HCT116 (cell line): ENCODE measurements at regions of chr11 and their contacts with region 1.

Region 1: GRCh38 chr11:13183094-13183825 is 94.3 kb upstream of the BMAL1 start:
- DNase-seq: no peak
- ATAC-seq: peak; percentile 85
- H3K4me3 ChIP-seq: peak overlapping the region; percentile 34 to 52
- H3K27ac ChIP-seq: no peak overlapping the region
- H3K4me1 ChIP-seq: peaks cover 0 to 6% of the 10 kb centered on the region in 2 experiments; a peak in 2 of 4 replicates
- H3K27me3 ChIP-seq: no peaks in the 10 kb centered on the region
- CTCF ChIP-seq: peak; percentile 59 to 61 (median 60)
- POLR2A ChIP-seq: no peak
- RAD21 ChIP-seq: peak; percentile 70

Region 2: DNA sequence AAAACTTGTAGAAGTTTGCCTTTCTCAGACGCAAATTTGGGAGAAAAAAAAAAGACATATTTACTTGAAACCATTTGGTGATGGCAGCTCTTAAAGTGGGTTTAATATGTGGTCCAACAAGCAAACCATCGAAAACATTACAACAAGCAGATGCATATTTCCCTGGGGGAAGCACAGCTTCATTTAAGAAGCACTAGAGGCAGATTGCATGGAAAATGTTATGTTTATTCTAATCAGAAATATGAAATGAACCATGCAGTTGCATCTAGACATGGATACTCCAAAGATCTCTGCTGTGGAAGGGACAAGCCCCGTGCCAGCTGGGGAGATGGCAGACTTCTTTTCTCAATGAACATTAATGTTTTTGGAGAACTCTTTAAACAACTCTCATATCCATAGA is 863.3 kb before region 1 on chr11:
- CTCF ChIA-PET with region 1: no interaction called
- POLR2A ChIA-PET with region 1: no interaction called
- RAD21 ChIA-PET with region 1: no interaction called
- intact Hi-C with region 1: loop called (anchors 10 kb)
- DNase-seq: no peak
- ATAC-seq: no peak
- H3K4me3 ChIP-seq: no peak overlapping the region
- H3K27ac ChIP-seq: no peak overlapping the region
- H3K4me1 ChIP-seq: no peaks in the 10 kb centered on the region
- H3K27me3 ChIP-seq: no peaks in the 10 kb centered on the region
- CTCF ChIP-seq: no peak
- POLR2A ChIP-seq: no peak
- RAD21 ChIP-seq: no peak

Region 3: GRCh38 chr11:13135385-13136271 is 47.6 kb before region 1 on chr11:
- CTCF ChIA-PET with region 1: no interaction called
- POLR2A ChIA-PET with region 1: no interaction called
- RAD21 ChIA-PET with region 1: no interaction called
- intact Hi-C with region 1: no loop called
- DNase-seq: no peak
- ATAC-seq: peak; percentile 57
- H3K4me3 ChIP-seq: no peak overlapping the region
- H3K27ac ChIP-seq: no peak overlapping the region
- H3K4me1 ChIP-seq: peaks cover 14 to 42% of the 10 kb centered on the region in 2 experiments
- H3K27me3 ChIP-seq: no peaks in the 10 kb centered on the region
- CTCF ChIP-seq: no peak
- POLR2A ChIP-seq: no peak
- RAD21 ChIP-seq: no peak

Region 4: GRCh38 chr11:13343931-13344717 is 160.9 kb after region 1 on chr11:
- CTCF ChIA-PET with region 1: interaction called, 3 read pairs
- POLR2A ChIA-PET with region 1: no interaction called
- RAD21 ChIA-PET with region 1: no interaction called
- intact Hi-C with region 1: loop called (anchors 1 kb)
- DNase-seq: no peak
- ATAC-seq: peak; percentile 75
- H3K4me3 ChIP-seq: no peak overlapping the region
- H3K27ac ChIP-seq: no peak overlapping the region
- H3K4me1 ChIP-seq: peaks cover 11 to 28% of the 10 kb centered on the region in 2 experiments
- H3K27me3 ChIP-seq: no peaks in the 10 kb centered on the region
- CTCF ChIP-seq: peak; percentile 81 to 85 (median 82); a peak in 5 of 6 replicates
- POLR2A ChIP-seq: no peak
- RAD21 ChIP-seq: peak; percentile 89